Endothelial cell of umbilical vein (primary cell): ENCODE measurements at regions of chr12 and their contacts with region 1.

Region 1: DNA sequence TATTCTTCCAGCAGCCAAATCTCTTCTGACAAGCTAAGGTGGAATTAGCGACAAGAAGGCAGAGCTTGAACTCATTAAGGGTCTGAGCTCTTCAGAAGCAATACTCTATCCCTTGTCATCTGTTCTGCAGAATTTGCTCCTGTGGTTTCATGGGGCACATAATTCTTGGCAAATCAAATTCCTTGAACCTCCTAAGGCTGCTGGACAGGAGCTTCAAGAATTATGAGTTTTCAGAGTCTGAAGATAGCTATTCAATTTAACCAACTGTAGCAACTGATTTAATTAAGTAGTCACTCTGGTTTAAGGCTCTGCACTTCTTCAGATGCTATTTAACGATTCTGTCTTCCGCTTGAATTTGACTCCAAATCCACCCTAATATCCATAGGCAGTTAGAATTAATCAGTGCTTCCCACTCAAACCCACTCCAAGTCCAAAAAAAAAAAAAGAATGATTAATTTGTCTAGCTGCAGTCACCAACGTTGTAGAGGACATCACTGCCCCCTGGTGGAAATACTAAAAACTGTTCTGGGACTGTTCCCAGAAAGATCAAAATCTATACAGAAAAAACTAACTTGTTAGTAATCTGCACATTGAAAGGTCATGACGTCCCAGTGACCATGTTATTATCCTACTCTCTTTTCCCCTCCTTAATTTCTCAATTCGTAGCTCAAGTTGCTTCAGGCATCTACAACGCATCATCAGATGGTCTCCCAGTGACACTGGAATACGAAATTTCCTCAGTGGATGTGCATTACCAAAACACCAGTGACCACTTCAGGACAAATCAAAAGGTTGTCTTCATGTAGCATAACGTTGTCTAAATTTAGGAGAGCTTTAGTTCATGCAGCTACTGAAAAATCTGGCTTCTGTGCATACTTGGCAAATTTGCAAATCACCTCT is 169.8 kb downstream of the KIF21A start:
- DNase-seq: peak; percentile 67
- H3K4me3 ChIP-seq: no peak overlapping the region
- H3K27ac ChIP-seq: no peak overlapping the region
- H3K4me1 ChIP-seq: no peaks in the 10 kb centered on the region
- H3K27me3 ChIP-seq: peaks cover 7 to 9% of the 10 kb centered on the region in 2 experiments
- CTCF ChIP-seq: peak; percentile 57 to 67
- POLR2A ChIP-seq: no peak

Region 2: GRCh38 chr12:38138225-38139221 is 1134.6 kb before region 1 on chr12:
- CTCF ChIA-PET with region 1: interaction called, 4 read pairs
- POLR2A ChIA-PET with region 1: no interaction called
- dilution Hi-C with region 1: no loop called
- intact Hi-C with region 1: loop called (anchors 5 kb)
- DNase-seq: peak; percentile 72
- H3K4me3 ChIP-seq: peak overlapping the region in 1 of 3 experiments; percentile 27
- H3K27ac ChIP-seq: no peak overlapping the region
- H3K4me1 ChIP-seq: no peaks in the 10 kb centered on the region
- H3K27me3 ChIP-seq: no peaks in the 10 kb centered on the region
- CTCF ChIP-seq: peak; percentile 84 to 89
- POLR2A ChIP-seq: no peak

Region 3: GRCh38 chr12:38332814-38333213 is 940.3 kb before region 1 on chr12:
- CTCF ChIA-PET with region 1: interaction called, 35 read pairs
- POLR2A ChIA-PET with region 1: no interaction called
- dilution Hi-C with region 1: no loop called
- intact Hi-C with region 1: loop called (anchors 1 kb)
- DNase-seq: no peak
- H3K4me3 ChIP-seq: no peak overlapping the region
- H3K27ac ChIP-seq: no peak overlapping the region
- H3K4me1 ChIP-seq: no peaks in the 10 kb centered on the region
- H3K27me3 ChIP-seq: no peaks in the 10 kb centered on the region
- CTCF ChIP-seq: no peak
- POLR2A ChIP-seq: no peak

Region 4: DNA sequence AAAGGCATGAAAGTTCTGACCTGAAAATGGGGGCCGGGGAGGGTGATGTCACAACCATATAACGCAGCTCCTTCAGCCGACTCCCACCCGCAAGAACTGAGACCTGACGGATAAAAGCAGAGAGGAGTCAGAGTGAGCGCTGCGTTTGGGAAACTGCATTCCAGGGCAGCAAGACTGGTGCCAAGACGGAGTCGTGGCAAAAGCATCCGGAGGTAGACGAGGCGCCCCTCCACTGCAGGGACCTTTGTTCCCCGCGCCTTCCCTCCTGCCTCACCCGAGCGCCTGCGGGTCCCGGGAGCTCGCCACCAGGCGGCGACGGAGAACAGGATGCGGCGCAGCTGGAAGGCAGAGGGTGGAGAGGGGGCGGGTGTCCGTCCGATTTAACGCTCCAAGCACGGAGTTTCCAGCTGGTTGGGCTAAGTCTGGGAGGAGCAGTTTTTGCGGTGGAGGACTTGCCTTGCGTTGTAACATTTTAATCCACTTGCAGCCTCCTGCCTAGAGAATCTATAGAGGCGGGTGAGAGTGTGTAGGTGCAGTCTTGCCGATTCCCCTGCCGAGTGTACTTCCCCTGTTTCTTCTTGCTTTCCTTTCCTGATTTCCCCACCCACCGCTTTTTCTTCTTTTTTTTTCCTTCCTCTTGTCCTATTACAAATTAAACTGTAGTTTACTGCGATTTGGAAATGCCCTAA is 366.5 kb before region 1 on chr12:
- CTCF ChIA-PET with region 1: interaction called, 57 read pairs
- POLR2A ChIA-PET with region 1: no interaction called
- dilution Hi-C with region 1: no loop called
- intact Hi-C with region 1: loop called (anchors 5 kb)
- DNase-seq: peak; percentile 84
- H3K4me3 ChIP-seq: peak overlapping the region; percentile 64 to 76 (median 70)
- H3K27ac ChIP-seq: peak overlapping the region; percentile 11
- H3K4me1 ChIP-seq: peaks cover 19% of the 10 kb centered on the region
- H3K27me3 ChIP-seq: no peaks in the 10 kb centered on the region
- CTCF ChIP-seq: peak; percentile 95 to 98
- POLR2A ChIP-seq: no peak

Region 5: GRCh38 chr12:38995249-38995648 is 277.9 kb before region 1 on chr12:
- CTCF ChIA-PET with region 1: no interaction called
- POLR2A ChIA-PET with region 1: no interaction called
- dilution Hi-C with region 1: no loop called
- intact Hi-C with region 1: no loop called
- DNase-seq: no peak
- H3K4me3 ChIP-seq: no peak overlapping the region
- H3K27ac ChIP-seq: no peak overlapping the region
- H3K4me1 ChIP-seq: no peaks in the 10 kb centered on the region
- H3K27me3 ChIP-seq: no peaks in the 10 kb centered on the region
- CTCF ChIP-seq: no peak
- POLR2A ChIP-seq: no peak

Region 6: GRCh38 chr12:39103552-39104165 is 169.5 kb before region 1 on chr12:
- CTCF ChIA-PET with region 1: interaction called, 33 read pairs
- POLR2A ChIA-PET with region 1: no interaction called
- dilution Hi-C with region 1: no loop called
- intact Hi-C with region 1: no loop called
- DNase-seq: peak; percentile 53
- H3K4me3 ChIP-seq: no peak overlapping the region
- H3K27ac ChIP-seq: no peak overlapping the region
- H3K4me1 ChIP-seq: no peaks in the 10 kb centered on the region
- H3K27me3 ChIP-seq: peaks cover 0 to 2% of the 10 kb centered on the region in 2 experiments
- CTCF ChIP-seq: peak; percentile 56 to 68
- POLR2A ChIP-seq: no peak

Region 7: DNA sequence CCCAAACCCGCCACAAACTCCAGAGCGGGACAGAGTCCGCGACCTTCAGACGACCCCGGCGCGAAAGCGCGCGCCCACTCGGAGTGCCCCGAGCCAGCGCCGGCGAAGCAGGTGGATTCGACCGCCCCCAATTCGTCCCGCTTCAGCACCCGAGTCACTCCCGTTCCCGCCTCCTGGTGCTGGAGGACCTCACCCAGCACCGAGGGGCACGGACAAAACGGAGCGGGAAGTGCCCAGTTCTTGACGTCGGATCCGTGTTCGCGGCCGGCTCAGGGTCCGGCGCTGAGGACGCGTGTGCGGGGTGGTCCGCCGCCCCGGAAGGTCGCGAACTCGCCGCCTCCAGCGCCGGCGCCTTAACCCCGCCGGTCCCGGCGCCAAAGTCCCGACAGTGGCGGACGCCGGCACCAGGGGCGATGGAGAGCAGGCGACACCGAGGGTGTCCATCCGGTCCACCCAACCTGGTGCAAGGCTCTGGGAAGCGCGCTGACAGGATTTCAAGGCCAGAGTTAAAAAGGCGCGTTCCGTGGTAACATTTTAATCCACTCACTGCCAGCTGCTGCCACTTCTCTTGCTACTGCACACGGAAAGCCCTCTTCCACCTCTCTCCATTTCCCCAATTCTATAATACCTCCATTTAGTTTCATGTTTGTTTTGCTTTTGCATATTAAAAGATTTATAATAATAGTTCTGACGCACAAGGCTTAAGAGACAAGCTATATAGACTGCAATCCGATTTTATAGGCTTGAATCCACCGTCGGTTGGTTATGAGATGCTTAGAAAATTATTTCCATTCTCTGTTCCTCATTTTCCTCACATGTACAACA is 127.7 kb before region 1 on chr12:
- CTCF ChIA-PET with region 1: interaction called, 24 read pairs
- POLR2A ChIA-PET with region 1: no interaction called
- dilution Hi-C with region 1: no loop called
- intact Hi-C with region 1: loop called (anchors 1 kb)
- DNase-seq: no peak
- H3K4me3 ChIP-seq: peak overlapping the region; percentile 33 to 57 (median 47)
- H3K27ac ChIP-seq: no peak overlapping the region
- H3K4me1 ChIP-seq: peaks cover 3% of the 10 kb centered on the region
- H3K27me3 ChIP-seq: peaks cover 17 to 23% of the 10 kb centered on the region in 2 experiments
- CTCF ChIP-seq: peak in 1 of 2 donors; percentile 51
- POLR2A ChIP-seq: no peak

Region 8: GRCh38 chr12:39230086-39230485 is 43.0 kb before region 1 on chr12:
- CTCF ChIA-PET with region 1: no interaction called
- POLR2A ChIA-PET with region 1: no interaction called
- dilution Hi-C with region 1: no loop called
- intact Hi-C with region 1: no loop called
- DNase-seq: peak; percentile 26
- H3K4me3 ChIP-seq: no peak overlapping the region
- H3K27ac ChIP-seq: no peak overlapping the region
- H3K4me1 ChIP-seq: peaks cover 2% of the 10 kb centered on the region
- H3K27me3 ChIP-seq: no peaks in the 10 kb centered on the region
- CTCF ChIP-seq: no peak
- POLR2A ChIP-seq: no peak

Region 9: DNA sequence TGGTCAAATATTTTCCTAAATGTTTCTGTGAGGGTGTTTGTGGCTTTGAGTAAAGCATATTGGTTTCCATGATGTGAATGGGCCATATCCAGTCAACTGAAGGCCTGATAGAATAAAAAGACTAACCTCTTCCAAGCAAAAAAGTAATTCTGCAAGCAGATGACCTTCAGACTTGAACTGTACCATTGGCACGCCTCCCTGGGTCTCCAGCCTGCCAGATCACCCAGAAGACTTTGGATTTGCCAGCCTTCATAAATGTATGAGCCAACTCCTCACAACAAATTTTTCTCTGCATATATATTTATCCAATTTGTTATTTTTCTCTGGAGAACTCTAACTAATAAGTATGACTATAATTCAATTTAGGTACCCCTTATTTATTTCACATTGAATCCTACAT is 20.5 kb before region 1 on chr12:
- CTCF ChIA-PET with region 1: interaction called, 13 read pairs
- POLR2A ChIA-PET with region 1: no interaction called
- dilution Hi-C with region 1: no loop called
- intact Hi-C with region 1: no loop called
- DNase-seq: no peak
- H3K4me3 ChIP-seq: no peak overlapping the region
- H3K27ac ChIP-seq: no peak overlapping the region
- H3K4me1 ChIP-seq: no peaks in the 10 kb centered on the region
- H3K27me3 ChIP-seq: no peaks in the 10 kb centered on the region
- CTCF ChIP-seq: no peak
- POLR2A ChIP-seq: no peak